ENCODE measurements at regions of chr17 and their contacts with region 1.

Region 1: DNA sequence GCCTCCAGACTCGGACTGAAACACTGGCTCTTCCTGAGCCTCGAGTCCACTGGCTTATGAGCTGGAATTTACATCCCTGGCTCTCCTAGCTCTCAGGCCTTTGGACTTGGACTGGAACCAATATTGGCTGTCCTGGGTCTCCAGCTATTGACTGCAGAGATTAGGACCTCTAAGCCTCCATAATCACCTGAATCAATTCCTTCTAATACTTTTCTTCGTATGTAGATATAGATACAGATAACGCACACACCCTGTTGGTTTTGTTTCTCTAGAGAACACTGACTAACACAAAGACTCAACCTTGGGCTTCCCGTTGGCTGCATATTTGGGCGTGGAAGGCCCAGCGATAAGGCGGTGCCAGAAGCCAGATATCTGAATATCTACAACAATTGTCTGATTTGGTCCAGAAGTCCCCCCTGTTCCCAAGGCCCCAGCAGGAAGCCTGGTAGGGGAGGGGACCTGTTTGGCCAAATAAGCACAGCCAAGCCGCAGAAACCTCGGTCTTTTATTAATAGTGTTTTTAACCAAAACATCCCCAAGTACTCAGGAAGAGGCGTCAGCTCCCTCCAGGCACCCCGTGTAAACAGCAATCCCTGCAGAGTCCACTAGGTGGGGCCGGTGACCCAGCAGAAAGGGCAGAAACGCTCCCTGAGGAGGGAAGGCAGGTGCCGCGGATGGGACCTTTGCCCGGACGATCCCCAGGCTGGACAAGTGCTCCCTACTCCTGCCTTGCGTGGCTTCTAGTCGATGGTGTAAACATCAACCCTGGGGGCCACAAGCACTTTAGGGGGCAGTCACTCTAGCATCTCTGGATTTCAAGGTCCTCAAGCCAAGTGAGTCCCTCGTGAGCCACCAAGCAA is 57.0 kb downstream of the ABR start:
- DNase-seq: peak; percentile 75
- H3K4me3 ChIP-seq: peak overlapping the region; percentile 8
- H3K27ac ChIP-seq: peak overlapping the region; percentile 34
- H3K4me1 ChIP-seq: peaks cover 24% of the 10 kb centered on the region
- CTCF ChIP-seq: peak; percentile 93

Region 2: DNA sequence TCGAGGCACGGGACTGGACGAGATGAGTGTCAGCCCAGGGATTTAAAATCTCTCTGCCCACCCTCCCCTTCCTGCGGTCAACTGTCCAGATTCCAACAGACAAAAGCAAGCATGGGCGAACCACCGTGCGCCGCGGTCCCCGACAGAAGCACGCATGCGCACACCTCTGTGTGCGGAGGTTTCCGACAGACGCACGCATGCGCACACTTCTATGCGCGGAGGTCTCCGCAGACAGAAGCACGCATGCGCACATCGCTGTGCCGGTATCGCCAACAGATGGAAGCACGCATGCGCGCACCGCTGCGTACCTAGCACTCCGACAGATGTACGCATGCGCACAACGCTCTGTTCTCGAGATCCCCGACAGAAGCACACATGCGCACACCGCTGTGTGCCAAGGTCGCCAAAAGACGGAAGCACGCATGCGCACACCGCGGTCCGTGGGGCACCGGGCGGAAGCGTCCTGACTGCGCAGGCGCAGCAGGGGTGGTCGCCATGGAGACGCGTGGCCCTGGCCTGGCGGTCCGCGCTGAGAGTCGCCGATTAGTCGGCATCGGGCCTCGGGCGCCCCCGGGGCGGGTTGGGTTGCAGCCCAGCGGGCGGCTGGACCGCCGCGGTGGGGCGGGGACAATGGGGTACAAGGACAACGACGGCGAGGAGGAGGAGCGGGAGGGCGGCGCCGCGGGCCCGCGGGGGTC is 712.8 kb before region 1 on chr17:
- CTCF ChIA-PET with region 1: no interaction called
- POLR2A ChIA-PET with region 1: no interaction called
- intact Hi-C with region 1: no loop called
- DNase-seq: peak; percentile 100
- H3K4me3 ChIP-seq: peak overlapping the region; percentile 79
- H3K27ac ChIP-seq: peak overlapping the region; percentile 35
- H3K4me1 ChIP-seq: peaks cover 13% of the 10 kb centered on the region
- CTCF ChIP-seq: no peak

Region 3: DNA sequence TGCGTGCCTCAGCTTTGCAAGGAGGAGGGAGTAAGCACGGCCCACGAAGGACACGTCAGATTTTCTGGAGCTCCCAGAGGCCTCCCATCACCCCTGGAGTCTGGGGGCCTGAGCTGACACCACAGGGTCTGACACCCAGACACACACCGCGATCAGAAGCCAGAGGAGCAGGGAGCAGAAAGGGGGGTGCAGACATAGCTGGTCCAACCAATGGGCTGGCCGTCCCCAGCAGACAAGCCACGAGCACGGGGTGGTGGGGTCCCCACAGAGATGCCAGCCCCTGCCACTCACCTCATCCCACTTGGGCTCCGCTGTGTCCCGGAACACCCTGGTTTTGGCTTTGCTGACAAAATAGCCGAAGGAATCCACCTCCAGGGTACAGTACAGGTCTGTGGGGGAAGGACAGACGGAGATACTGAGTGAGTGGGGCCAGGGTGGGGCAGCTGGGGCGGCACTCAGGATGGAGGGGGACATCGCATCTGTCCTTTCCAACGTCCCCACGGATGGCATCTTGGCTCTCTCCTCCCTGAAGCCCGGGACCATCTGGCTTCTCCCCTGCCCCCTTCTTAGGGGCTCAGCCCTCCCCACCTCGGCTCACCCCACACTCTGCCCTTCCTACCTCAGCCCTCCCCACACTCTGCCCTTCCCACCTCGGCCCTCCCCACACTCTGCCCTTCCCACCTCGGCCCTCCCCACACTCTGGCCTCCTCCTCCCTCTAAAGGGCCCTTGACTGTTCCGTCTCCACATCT is 72.3 kb before region 1 on chr17:
- CTCF ChIA-PET with region 1: no interaction called
- POLR2A ChIA-PET with region 1: no interaction called
- intact Hi-C with region 1: no loop called
- DNase-seq: no peak
- H3K4me3 ChIP-seq: no peak overlapping the region
- H3K27ac ChIP-seq: no peak overlapping the region
- H3K4me1 ChIP-seq: no peaks in the 10 kb centered on the region
- CTCF ChIP-seq: no peak

Region 4: GRCh38 chr17:1137465-1137894 is 14.7 kb after region 1 on chr17:
- CTCF ChIA-PET with region 1: no interaction called
- POLR2A ChIA-PET with region 1: no interaction called
- intact Hi-C with region 1: no loop called
- DNase-seq: no peak
- H3K4me3 ChIP-seq: no peak overlapping the region
- H3K27ac ChIP-seq: no peak overlapping the region
- H3K4me1 ChIP-seq: peaks cover 6% of the 10 kb centered on the region
- CTCF ChIP-seq: no peak

Region 5: DNA sequence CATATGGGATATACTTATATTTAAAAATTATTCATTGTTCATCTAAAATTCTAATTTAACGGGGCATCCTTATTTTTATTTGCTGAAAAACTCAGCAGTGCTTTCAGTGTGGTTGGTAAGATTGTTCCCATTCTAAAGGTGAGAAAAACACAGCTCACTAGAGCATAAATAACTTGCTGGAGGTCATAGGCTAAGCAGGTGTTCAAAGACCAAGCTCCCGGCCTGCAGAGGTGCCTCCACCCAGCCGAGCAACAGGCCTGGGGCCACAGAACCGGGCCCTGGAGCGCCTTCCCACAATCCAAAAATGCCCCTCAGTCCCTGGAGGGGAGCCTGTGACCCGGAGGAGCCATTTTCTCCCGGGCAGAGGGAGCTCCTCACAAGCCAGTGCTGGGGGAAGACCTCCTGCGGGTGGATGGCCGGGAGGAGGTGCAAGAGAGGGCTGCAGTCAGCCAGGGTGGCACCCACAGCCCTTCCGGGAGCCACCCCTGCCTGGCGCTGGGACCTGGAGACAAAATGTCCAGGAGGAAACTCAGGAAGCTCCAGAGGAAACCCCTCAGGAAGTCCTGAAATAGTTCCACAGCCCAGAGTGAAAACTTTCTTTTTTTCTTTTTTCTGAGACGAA is 42.3 kb after region 1 on chr17:
- CTCF ChIA-PET with region 1: no interaction called
- POLR2A ChIA-PET with region 1: interaction called, 3 read pairs
- intact Hi-C with region 1: loop called (anchors 5 kb)
- DNase-seq: peak; percentile 35
- H3K4me3 ChIP-seq: no peak overlapping the region
- H3K27ac ChIP-seq: peak overlapping the region; percentile 52
- H3K4me1 ChIP-seq: peaks cover 15% of the 10 kb centered on the region
- CTCF ChIP-seq: peak; percentile 48

Region 6: GRCh38 chr17:1186923-1187771 is 64.4 kb after region 1 on chr17:
- CTCF ChIA-PET with region 1: interaction called, 3 read pairs
- POLR2A ChIA-PET with region 1: interaction called, 3 read pairs
- intact Hi-C with region 1: loop called (anchors 1 kb)
- DNase-seq: peak; percentile 80
- H3K4me3 ChIP-seq: no peak overlapping the region
- H3K27ac ChIP-seq: no peak overlapping the region
- H3K4me1 ChIP-seq: peaks cover 71% of the 10 kb centered on the region
- CTCF ChIP-seq: peak; percentile 93

Region 7: DNA sequence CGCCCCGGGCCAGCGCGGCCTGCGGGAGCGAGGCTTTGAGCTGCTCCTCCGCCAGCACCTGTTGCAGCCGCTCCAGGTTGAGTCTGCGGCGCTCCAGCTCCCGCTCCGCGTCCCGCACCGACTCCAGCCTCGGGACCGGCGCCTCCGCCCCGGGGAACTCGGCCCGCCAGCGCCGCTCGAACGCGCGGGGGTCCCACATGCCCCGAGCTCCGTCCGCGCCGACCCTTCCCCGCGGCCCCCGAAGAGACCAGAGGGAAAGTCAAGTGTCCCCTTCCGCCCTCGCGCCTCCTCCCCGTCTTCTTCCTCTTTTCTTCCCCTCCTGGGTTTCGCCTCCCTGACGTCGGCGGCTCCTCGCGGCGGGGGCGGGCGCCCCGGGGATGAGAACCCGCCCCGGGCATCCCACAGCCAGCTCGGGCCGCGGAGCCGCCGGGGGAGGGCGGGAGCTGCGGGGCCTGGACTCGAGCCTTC is 106.7 kb after region 1 on chr17:
- CTCF ChIA-PET with region 1: no interaction called
- POLR2A ChIA-PET with region 1: interaction called, 3 read pairs
- intact Hi-C with region 1: loop called (anchors 2 kb)
- DNase-seq: peak; percentile 85
- H3K4me3 ChIP-seq: peak overlapping the region; percentile 88
- H3K27ac ChIP-seq: peak overlapping the region; percentile 86
- H3K4me1 ChIP-seq: peaks cover 32% of the 10 kb centered on the region
- CTCF ChIP-seq: no peak

Region 8: GRCh38 chr17:1331708-1332107 is 208.9 kb after region 1 on chr17:
- CTCF ChIA-PET with region 1: interaction called, 3 read pairs
- POLR2A ChIA-PET with region 1: no interaction called
- intact Hi-C with region 1: loop called (anchors 1 kb)
- DNase-seq: no peak
- H3K4me3 ChIP-seq: no peak overlapping the region
- H3K27ac ChIP-seq: no peak overlapping the region
- H3K4me1 ChIP-seq: no peaks in the 10 kb centered on the region
- CTCF ChIP-seq: no peak